PC-9 (cell line): ENCODE measurements at regions of chr1 and their contacts with region 1.

Region 1: GRCh38 chr1:4344065-4344732 is 310.2 kb upstream of the AJAP1 start:
- DNase-seq: no peak
- H3K4me3 ChIP-seq: no peak overlapping the region
- H3K27ac ChIP-seq: no peak overlapping the region
- H3K4me1 ChIP-seq: no peaks in the 10 kb centered on the region
- H3K27me3 ChIP-seq: no peaks in the 10 kb centered on the region; the same call in 1 of the 2 replicates
- CTCF ChIP-seq: no peak

Region 2: GRCh38 chr1:4422504-4423289 is 78.5 kb after region 1 on chr1:
- CTCF ChIA-PET with region 1: no interaction called
- POLR2A ChIA-PET with region 1: interaction called, 11 read pairs
- intact Hi-C with region 1: no loop called
- DNase-seq: no peak
- H3K4me3 ChIP-seq: no peak overlapping the region
- H3K27ac ChIP-seq: no peak overlapping the region
- H3K4me1 ChIP-seq: no peaks in the 10 kb centered on the region
- H3K27me3 ChIP-seq: no peaks in the 10 kb centered on the region
- CTCF ChIP-seq: no peak